ENCODE measurements at regions of chr11 and their contacts with region 1.

Region 1: GRCh38 chr11:122671400-122671891 is 15.9 kb downstream of the UBASH3B start:
- DNase-seq: no peak
- H3K4me3 Mint-ChIP-seq: no peak overlapping the region
- H3K27ac Mint-ChIP-seq: no peak overlapping the region
- H3K4me1 Mint-ChIP-seq: peaks cover 34% of the 10 kb centered on the region
- H3K27me3 Mint-ChIP-seq: peaks cover 3% of the 10 kb centered on the region

Region 2: GRCh38 chr11:123760894-123761293 is 1089.4 kb after region 1 on chr11:
- intact Hi-C with region 1: loop called (anchors 10 kb)
- DNase-seq: peak; percentile 55
- H3K4me3 Mint-ChIP-seq: no peak overlapping the region
- H3K27ac Mint-ChIP-seq: peak overlapping the region; percentile 65
- H3K4me1 Mint-ChIP-seq: peaks cover 15% of the 10 kb centered on the region
- H3K27me3 Mint-ChIP-seq: peaks cover 6% of the 10 kb centered on the region